ENCODE measurements at regions of chr7 and their contacts with region 1.

Region 1: DNA sequence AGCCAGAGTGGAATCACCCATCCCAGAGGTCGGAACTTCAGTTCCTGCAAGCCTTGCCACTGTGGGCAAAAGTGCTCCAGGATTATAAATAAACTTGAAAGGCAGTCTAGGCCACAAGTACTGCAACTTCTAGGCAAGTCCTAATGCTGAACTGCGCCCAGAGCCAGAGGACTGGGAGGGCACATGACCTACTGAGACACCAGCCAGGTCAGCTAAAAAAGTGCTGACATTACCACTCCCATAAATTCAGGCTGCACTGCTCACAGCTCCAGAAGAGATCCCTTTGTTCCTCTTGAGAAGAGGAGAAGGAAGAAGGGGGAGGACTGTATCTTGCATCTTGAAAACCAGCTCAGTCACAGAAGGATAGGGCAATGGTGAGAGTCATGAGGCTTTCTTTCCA is 1084.1 kb upstream of the PHF14 start:
- DNase-seq: peak in 1 of 5 donors; percentile 25
- ATAC-seq: peak in 2 of 4 donors; percentile 72 to 74
- H3K4me3 ChIP-seq: no peak overlapping the region
- H3K27ac ChIP-seq: no peak overlapping the region
- H3K4me1 ChIP-seq: no peaks in the 10 kb centered on the region
- H3K27me3 ChIP-seq: no peaks in the 10 kb centered on the region
- CTCF ChIP-seq: no peak
- POLR2A ChIP-seq: no peak

Region 2: DNA sequence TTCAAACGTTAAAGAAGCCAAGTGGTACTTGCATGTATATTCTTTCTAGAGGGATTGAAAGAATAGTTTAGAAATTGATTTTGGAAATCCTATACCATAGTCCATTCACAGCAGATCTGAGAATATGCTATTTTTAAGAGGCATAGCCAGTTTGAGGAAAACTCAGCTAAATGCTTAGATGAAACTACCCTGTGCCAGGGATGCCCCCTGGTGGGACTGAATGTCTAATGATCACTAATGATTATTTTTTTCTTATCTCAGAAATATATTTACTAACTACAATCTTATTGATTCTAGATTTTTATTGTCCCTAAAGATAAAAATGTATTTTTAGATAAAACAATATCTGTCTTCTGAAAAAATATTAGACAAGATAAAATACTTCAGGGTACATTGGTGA is 239.2 kb after region 1 on chr7:
- intact Hi-C with region 1: loop called in 1 of 10 experiments (anchors 10 kb)
- DNase-seq: no peak
- ATAC-seq: no peak
- H3K4me3 ChIP-seq: no peak overlapping the region
- H3K27ac ChIP-seq: no peak overlapping the region
- H3K4me1 ChIP-seq: no peaks in the 10 kb centered on the region
- H3K27me3 ChIP-seq: no peaks in the 10 kb centered on the region
- CTCF ChIP-seq: peak in 5 of 12 donors; percentile 4 to 43 (median 20)
- POLR2A ChIP-seq: no peak

Measured in heart left ventricle (tissue), 16 donors.